ENCODE measurements at regions of chr12 and their contacts with region 1.

Region 1: GRCh38 chr12:1634590-1635191 is 5.7 kb downstream of the WNT5B start:
- DNase-seq: peak; percentile 76
- H3K4me3 Mint-ChIP-seq: no peak overlapping the region
- H3K27ac Mint-ChIP-seq: no peak overlapping the region
- H3K4me1 Mint-ChIP-seq: peaks cover 9% of the 10 kb centered on the region
- H3K27me3 Mint-ChIP-seq: peaks cover 32% of the 10 kb centered on the region

Region 2: GRCh38 chr12:1527789-1528188 is 106.9 kb before region 1 on chr12:
- CTCF ChIA-PET with region 1: no interaction called
- intact Hi-C with region 1: no loop called
- DNase-seq: no peak
- H3K4me3 Mint-ChIP-seq: no peak overlapping the region
- H3K27ac Mint-ChIP-seq: no peak overlapping the region
- H3K4me1 Mint-ChIP-seq: peaks cover 18% of the 10 kb centered on the region
- H3K27me3 Mint-ChIP-seq: peaks cover 56% of the 10 kb centered on the region

Region 3: DNA sequence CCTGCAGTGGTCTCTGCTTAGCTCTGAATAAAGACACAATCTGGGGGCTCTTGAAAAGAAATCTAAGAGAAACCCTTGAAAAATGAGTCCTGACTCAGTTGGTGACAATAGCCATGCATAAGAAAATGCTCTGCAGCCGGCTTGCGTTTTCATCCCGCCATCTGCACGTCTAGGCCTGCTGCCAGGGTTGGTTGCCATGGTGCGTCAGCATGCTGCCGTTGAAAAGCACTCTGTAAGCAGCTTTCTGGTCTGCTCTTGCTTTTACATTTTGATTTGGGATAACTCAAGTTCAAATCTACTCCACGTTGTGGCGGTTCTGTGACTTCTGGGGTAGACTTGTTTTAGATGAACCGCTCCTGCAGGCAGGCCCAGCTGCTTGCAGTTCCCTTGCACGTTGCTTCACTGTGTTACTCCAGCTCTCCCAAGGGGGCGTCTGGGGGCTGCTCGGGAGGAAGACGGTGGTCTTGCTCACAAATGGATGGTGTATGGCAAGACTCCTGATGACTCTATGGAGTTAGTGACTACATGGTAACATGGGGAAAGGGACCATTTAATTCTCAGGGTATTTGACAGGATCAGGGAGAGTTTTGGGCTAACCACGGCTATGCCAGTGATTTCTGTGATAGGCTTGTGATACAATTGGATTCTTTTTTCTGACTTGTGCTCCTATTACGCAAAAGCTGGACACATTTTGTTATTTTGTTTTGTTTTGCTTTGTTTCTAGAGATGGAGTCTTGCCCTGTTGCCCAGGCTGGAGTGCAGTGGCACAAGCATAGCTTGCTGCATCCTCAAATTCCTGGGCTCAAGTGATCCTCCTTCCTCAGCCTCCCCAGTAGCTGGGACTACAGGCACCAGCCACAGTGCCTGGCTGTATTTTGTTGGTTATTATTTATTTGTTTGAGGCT is 10.1 kb after region 1 on chr12:
- CTCF ChIA-PET with region 1: interaction called, 44 read pairs
- intact Hi-C with region 1: no loop called
- DNase-seq: no peak
- H3K4me3 Mint-ChIP-seq: no peak overlapping the region
- H3K27ac Mint-ChIP-seq: no peak overlapping the region
- H3K4me1 Mint-ChIP-seq: peaks cover 2% of the 10 kb centered on the region
- H3K27me3 Mint-ChIP-seq: peaks cover 2% of the 10 kb centered on the region

Region 4: GRCh38 chr12:1650260-1650977 is 15.7 kb after region 1 on chr12:
- CTCF ChIA-PET with region 1: interaction called, 44 read pairs
- intact Hi-C with region 1: loop called (anchors 1 kb)
- DNase-seq: no peak
- H3K4me3 Mint-ChIP-seq: no peak overlapping the region
- H3K27ac Mint-ChIP-seq: no peak overlapping the region
- H3K4me1 Mint-ChIP-seq: peaks cover 1% of the 10 kb centered on the region
- H3K27me3 Mint-ChIP-seq: peaks cover 2% of the 10 kb centered on the region

Region 5: DNA sequence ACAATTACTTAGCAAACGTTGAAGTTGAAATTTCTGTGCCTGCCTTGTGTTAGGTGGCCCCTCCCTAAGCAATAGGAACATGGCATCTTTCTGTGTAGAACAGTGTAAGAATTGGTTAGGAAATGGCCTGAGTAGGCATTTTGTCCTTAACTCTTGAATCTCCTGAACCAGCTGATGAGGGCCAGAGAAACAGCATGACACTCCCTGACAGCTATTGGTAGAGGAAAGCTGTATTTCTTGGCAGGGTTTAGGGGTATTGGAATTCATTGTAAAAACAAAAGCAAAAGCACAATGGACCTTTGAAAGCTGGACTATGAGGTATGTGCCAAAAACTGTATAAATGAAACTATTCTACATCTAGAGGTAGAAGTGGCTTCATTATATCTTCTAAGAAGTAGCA is 145.1 kb after region 1 on chr12:
- CTCF ChIA-PET with region 1: interaction called, 10 read pairs
- intact Hi-C with region 1: no loop called
- DNase-seq: no peak
- H3K4me3 Mint-ChIP-seq: no peak overlapping the region
- H3K27ac Mint-ChIP-seq: no peak overlapping the region
- H3K4me1 Mint-ChIP-seq: peaks cover 4% of the 10 kb centered on the region
- H3K27me3 Mint-ChIP-seq: no peaks in the 10 kb centered on the region

Region 6: GRCh38 chr12:2267703-2268501 is 633.2 kb after region 1 on chr12:
- CTCF ChIA-PET with region 1: no interaction called
- intact Hi-C with region 1: no loop called
- DNase-seq: no peak
- H3K4me3 Mint-ChIP-seq: no peak overlapping the region
- H3K27ac Mint-ChIP-seq: no peak overlapping the region
- H3K4me1 Mint-ChIP-seq: no peaks in the 10 kb centered on the region
- H3K27me3 Mint-ChIP-seq: no peaks in the 10 kb centered on the region

Region 7: GRCh38 chr12:2583091-2583497 is 948.4 kb after region 1 on chr12:
- CTCF ChIA-PET with region 1: no interaction called
- intact Hi-C with region 1: loop called (anchors 10 kb)
- DNase-seq: peak; percentile 62
- H3K4me3 Mint-ChIP-seq: no peak overlapping the region
- H3K27ac Mint-ChIP-seq: no peak overlapping the region
- H3K4me1 Mint-ChIP-seq: peaks cover 3% of the 10 kb centered on the region
- H3K27me3 Mint-ChIP-seq: peaks cover 31% of the 10 kb centered on the region